ENCODE measurements at regions of chr6 and their contacts with region 1.

Region 1: GRCh38 chr6:4870821-4871494 is 94.8 kb downstream of the CDYL start:
- DNase-seq: no peak
- H3K4me3 ChIP-seq: no peak overlapping the region
- H3K27ac ChIP-seq: no peak overlapping the region
- H3K4me1 ChIP-seq: peaks cover 38% of the 10 kb centered on the region
- CTCF ChIP-seq: no peak

Region 2: GRCh38 chr6:4936681-4937041 is 65.7 kb after region 1 on chr6:
- CTCF ChIA-PET with region 1: no interaction called
- POLR2A ChIA-PET with region 1: no interaction called
- intact Hi-C with region 1: loop called (anchors 5 kb)
- DNase-seq: peak; percentile 71
- H3K4me3 ChIP-seq: no peak overlapping the region
- H3K27ac ChIP-seq: no peak overlapping the region
- H3K4me1 ChIP-seq: peaks cover 6% of the 10 kb centered on the region
- CTCF ChIP-seq: peak; percentile 91

Region 3: GRCh38 chr6:4957521-4958231 is 86.7 kb after region 1 on chr6:
- CTCF ChIA-PET with region 1: no interaction called
- POLR2A ChIA-PET with region 1: no interaction called
- intact Hi-C with region 1: no loop called
- DNase-seq: no peak
- H3K4me3 ChIP-seq: no peak overlapping the region
- H3K27ac ChIP-seq: no peak overlapping the region
- H3K4me1 ChIP-seq: no peaks in the 10 kb centered on the region
- CTCF ChIP-seq: 0 out of 2 replicates have a peak, but pooled peaks have one; percentile 31

Region 4: DNA sequence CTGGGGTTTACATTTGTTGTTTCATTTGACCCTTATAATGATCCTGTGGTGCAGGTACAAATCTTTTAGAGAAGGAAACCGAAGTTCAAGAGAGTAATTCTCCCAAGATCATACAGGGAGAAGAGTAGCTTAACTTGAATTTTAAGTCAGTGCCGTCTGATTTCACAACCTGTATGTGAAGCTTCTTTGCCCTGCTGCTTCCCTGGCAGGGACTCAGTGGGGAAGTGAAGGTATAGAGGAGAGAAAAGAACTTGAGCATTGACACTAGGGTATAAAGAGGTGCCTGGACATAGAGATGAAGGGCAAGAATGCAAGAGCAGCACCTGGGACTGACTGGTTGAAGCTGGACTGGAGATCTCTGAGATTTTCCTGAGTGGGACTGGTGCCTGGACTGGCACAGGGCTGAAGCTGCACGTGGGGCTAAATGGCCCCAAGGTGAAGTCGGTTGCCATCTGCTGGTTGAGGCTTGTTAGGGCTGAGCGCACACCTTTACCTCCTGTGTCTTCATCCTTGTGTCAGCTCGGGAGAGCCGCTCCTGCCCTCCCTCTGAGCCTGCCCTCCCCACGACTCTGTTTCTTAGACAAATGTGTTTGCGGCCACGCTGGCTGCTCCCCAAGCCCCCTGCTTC is 432.2 kb after region 1 on chr6:
- CTCF ChIA-PET with region 1: no interaction called
- POLR2A ChIA-PET with region 1: no interaction called
- intact Hi-C with region 1: no loop called
- DNase-seq: peak; percentile 59
- H3K4me3 ChIP-seq: no peak overlapping the region
- H3K27ac ChIP-seq: no peak overlapping the region
- H3K4me1 ChIP-seq: peaks cover 7% of the 10 kb centered on the region
- CTCF ChIP-seq: peak; percentile 74

Measured in OCI-LY7 (cell line).